Endothelial cell of umbilical vein (primary cell): ENCODE measurements at regions of chr1 and their contacts with region 1.

Region 1: GRCh38 chr1:109649491-109649914 is 6.4 kb upstream of the GSTM4 start:
- DNase-seq: peak; percentile 60
- H3K4me3 ChIP-seq: peak overlapping the region; percentile 18 to 54 (median 37)
- H3K27ac ChIP-seq: no peak overlapping the region
- H3K4me1 ChIP-seq: no peaks in the 10 kb centered on the region
- H3K27me3 ChIP-seq: peaks cover 16 to 23% of the 10 kb centered on the region in 2 experiments
- CTCF ChIP-seq: peak in 1 of 2 donors; percentile 27
- POLR2A ChIP-seq: no peak

Region 2: DNA sequence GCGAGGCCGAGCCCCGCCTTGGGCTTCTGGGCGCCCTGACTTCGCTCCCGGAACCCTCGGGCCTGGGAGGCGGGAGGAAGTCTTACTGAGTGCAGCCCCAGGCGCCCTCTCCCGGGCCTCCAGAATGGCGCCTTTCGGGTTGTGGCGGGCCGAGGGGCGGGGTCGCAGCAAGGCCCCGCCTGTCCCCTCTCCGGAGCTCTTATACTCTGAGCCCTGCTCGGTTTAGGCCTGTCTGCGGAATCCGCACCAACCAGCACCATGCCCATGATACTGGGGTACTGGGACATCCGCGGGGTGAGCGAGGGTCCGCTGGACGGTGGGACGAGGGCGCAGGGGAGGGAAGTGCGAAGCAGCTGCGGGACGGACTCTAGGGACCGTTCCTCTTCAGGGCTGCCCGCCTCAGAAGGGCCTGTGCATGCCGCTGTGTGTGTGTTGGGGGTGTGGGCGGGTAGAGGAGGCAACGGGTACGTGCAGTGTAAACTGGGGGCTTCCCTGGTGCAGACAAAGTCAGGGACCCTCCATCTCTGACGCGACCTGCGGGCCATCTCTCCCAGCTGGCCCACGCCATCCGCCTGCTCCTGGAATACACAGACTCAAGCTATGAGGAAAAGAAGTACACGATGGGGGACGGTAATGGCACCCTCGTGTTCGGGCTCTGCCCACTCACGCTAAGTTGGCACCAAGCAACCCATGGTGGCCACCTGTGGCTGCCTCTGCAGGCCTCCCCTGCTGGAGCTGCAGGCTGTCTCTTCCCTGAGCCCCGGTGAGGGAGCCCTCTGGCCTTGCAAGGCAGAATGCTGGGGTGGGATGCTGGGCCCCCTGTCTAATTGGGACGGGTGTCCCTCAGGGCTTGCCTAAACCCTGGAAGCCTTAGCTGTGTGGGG is 38.4 kb after region 1 on chr1 and contains the start of gene GSTM1:
- CTCF ChIA-PET with region 1: interaction called, 27 read pairs
- POLR2A ChIA-PET with region 1: no interaction called
- dilution Hi-C with region 1: no loop called
- intact Hi-C with region 1: no loop called
- DNase-seq: no peak
- H3K4me3 ChIP-seq: no peak within 1 kb of the TSS
- H3K27ac ChIP-seq: no peak within 1 kb of the TSS
- H3K4me1 ChIP-seq: no peaks in the 10 kb centered on the region
- H3K27me3 ChIP-seq: no peaks in the 10 kb centered on the region
- CTCF ChIP-seq: no peak
- POLR2A ChIP-seq: no peak
- total RNA-seq, gene GSTM1: 35.5 TPM in 1 of 2 replicates, not detected in the other

Region 3: GRCh38 chr1:109892561-109893368 is 243.3 kb after region 1 on chr1:
- CTCF ChIA-PET with region 1: no interaction called
- POLR2A ChIA-PET with region 1: no interaction called
- dilution Hi-C with region 1: no loop called
- intact Hi-C with region 1: no loop called
- DNase-seq: peak; percentile 62
- H3K4me3 ChIP-seq: no peak overlapping the region
- H3K27ac ChIP-seq: peak overlapping the region; percentile 18
- H3K4me1 ChIP-seq: peaks cover 40% of the 10 kb centered on the region
- H3K27me3 ChIP-seq: peaks cover 0 to 4% of the 10 kb centered on the region in 2 experiments
- CTCF ChIP-seq: no peak
- POLR2A ChIP-seq: no peak